Tibial artery (tissue), 4 donors: ENCODE measurements at regions of chr3 and their contacts with region 1.

Region 1: DNA sequence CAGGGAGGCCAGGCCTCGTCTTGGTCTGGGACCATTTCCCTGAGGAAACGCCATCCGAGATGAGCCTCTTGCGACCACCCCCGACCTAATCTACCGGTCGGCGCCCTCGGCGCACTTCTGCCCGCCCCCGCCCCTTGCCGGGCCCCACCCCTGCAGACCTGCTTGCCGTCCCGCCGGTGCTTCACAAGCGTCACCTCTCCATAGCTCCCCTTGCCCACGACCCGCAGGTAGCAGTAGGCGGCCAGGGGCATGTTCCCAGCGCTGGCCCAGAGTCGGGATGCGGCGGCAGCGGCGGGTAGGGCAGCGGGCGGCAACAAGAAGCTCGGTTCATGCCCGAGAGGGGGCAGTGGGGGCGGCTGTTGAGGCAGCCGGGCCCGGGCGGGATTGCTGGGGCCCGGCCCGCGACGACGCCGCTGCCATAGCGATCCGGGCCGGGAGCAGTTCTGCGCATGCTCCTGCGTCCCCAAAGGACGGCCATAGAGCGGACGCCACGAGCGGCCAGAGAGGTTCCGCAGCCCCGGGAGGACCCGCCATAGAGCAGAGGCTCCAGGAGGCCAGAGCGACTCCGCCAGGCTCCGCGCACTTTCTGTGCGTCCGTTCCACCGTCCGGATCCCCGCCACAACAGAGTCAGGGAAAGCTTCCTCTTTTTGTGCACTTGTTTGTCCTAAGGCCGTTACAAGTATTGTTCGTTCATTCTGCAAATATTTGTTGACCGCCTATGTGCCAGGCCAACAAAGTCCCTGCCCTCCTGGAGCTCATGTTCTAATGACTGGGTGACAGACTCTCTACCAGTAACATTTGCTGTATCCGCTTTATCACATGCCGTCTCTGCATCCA is at the start of gene NEK4:
- DNase-seq: peak; percentile 90 to 95
- H3K4me3 ChIP-seq: peak within 1 kb of the TSS; percentile 83 to 99
- H3K27ac ChIP-seq: peak within 1 kb of the TSS; percentile 73 to 82
- H3K4me1 ChIP-seq: peaks cover 0 to 15% (median 11%) of the 10 kb centered on the region in 4 donors
- H3K27me3 ChIP-seq: no peaks in the 10 kb centered on the region
- CTCF ChIP-seq: peak; percentile 13 to 19

Region 2: GRCh38 chr3:52820736-52821135 is 50.0 kb after region 1 on chr3:
- intact Hi-C with region 1: loop called (anchors 10 kb)
- DNase-seq: no peak
- H3K4me3 ChIP-seq: no peak overlapping the region
- H3K27ac ChIP-seq: no peak overlapping the region
- H3K4me1 ChIP-seq: no peaks in the 10 kb centered on the region
- H3K27me3 ChIP-seq: no peaks in the 10 kb centered on the region
- CTCF ChIP-seq: peak; percentile 15 to 42